B cell (primary cell): ENCODE measurements at regions of chr2 and their contacts with region 1.

Region 1: GRCh38 chr2:230913406-230914143 is 11.5 kb downstream of the GPR55 start:
- DNase-seq: peak; percentile 82
- ATAC-seq: peak; percentile 87
- H3K4me3 ChIP-seq: no peak overlapping the region
- H3K4me3 Mint-ChIP-seq: no peak overlapping the region
- H3K27ac ChIP-seq: no peak overlapping the region
- H3K27ac Mint-ChIP-seq: no peak overlapping the region
- H3K4me1 ChIP-seq: peaks cover 0 to 10% of the 10 kb centered on the region in 2 donors
- H3K4me1 Mint-ChIP-seq: peaks cover 16% of the 10 kb centered on the region
- H3K27me3 ChIP-seq: no peaks in the 10 kb centered on the region
- H3K27me3 Mint-ChIP-seq: no peaks in the 10 kb centered on the region
- CTCF ChIP-seq: peak; percentile 80

Region 2: GRCh38 chr2:230864598-230865306 is 48.8 kb before region 1 on chr2 and contains the start of gene ITM2C:
- CTCF ChIA-PET with region 1: interaction called, 40 read pairs
- POLR2A ChIA-PET with region 1: no interaction called
- intact Hi-C with region 1: loop called (anchors 1 kb)
- DNase-seq: peak; percentile 82
- ATAC-seq: peak; percentile 80
- H3K4me3 ChIP-seq: peak within 1 kb of the TSS; percentile 41 to 83 (median 65)
- H3K4me3 Mint-ChIP-seq: peak within 1 kb of the TSS; percentile 90
- H3K27ac ChIP-seq: peak within 1 kb of the TSS; percentile 39 to 63
- H3K27ac Mint-ChIP-seq: peak within 1 kb of the TSS; percentile 78
- H3K4me1 ChIP-seq: peaks cover 46 to 59% of the 10 kb centered on the region in 2 donors
- H3K4me1 Mint-ChIP-seq: peaks cover 56% of the 10 kb centered on the region
- H3K27me3 ChIP-seq: no peaks in the 10 kb centered on the region
- H3K27me3 Mint-ChIP-seq: peaks cover 7% of the 10 kb centered on the region
- CTCF ChIP-seq: peak; percentile 76
- total RNA-seq, gene ITM2C: 36.9 and 37.4 TPM in 2 replicates

Region 3: GRCh38 chr2:230902180-230902899 is 11.2 kb before region 1 on chr2:
- CTCF ChIA-PET with region 1: interaction called, 13 read pairs
- POLR2A ChIA-PET with region 1: no interaction called
- intact Hi-C with region 1: no loop called
- DNase-seq: peak; percentile 52
- ATAC-seq: peak; percentile 81
- H3K4me3 ChIP-seq: no peak overlapping the region
- H3K4me3 Mint-ChIP-seq: peak overlapping the region; percentile 32
- H3K27ac ChIP-seq: no peak overlapping the region
- H3K27ac Mint-ChIP-seq: peak overlapping the region; percentile 41
- H3K4me1 ChIP-seq: peaks cover 13 to 21% of the 10 kb centered on the region in 2 donors
- H3K4me1 Mint-ChIP-seq: peaks cover 14% of the 10 kb centered on the region
- H3K27me3 ChIP-seq: no peaks in the 10 kb centered on the region
- H3K27me3 Mint-ChIP-seq: no peaks in the 10 kb centered on the region
- CTCF ChIP-seq: peak; percentile 54

Region 4: DNA sequence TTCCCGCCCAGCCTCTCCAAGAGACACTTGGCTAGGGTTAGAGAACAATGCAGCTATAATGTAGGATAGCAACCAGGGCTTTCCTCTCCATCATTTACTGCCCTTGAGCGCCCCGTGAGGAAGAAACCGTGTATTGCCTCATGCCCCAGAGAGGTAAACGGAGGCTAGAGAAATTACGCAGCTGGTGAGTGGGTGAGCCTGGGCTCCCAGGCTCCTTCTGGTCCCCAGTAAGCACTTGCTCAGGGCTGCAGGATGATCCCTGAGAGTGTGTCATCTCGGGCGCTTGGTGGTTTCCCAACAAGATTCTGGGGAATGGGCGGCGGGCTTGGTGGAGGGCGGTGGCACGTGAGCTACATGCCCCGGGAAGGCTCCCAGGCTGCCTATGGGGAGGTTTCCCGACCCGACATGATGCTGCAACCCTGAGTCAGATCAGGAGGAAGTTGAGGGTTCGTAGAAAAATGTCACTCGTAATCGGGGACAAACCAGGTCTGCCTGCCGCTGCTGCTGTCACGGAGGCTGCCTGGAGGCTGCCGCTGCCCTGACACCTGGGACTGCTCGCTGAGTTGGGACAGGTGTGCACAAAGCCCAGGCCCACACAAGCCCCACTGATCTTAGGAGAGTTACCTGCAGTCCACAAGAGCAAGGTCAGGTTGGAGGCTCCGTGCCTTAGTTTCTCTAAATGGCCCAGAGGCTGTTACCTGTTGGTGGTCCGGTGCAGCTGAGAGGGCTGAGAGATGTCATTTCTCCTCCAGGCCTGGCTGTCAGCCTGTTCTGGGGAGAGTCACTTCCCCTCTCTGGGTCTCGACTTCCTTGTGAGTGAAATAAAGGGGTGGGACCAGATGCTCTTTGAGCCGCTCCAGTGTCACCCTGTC is 11.1 kb after region 1 on chr2 and contains the start of gene GPR55:
- CTCF ChIA-PET with region 1: interaction called, 18 read pairs
- POLR2A ChIA-PET with region 1: no interaction called
- intact Hi-C with region 1: no loop called
- DNase-seq: peak; percentile 64
- ATAC-seq: peak; percentile 74
- H3K4me3 ChIP-seq: peak within 1 kb of the TSS in 4 of 5 experiments; percentile 39 to 60 (median 50)
- H3K4me3 Mint-ChIP-seq: peak within 1 kb of the TSS; percentile 85
- H3K27ac ChIP-seq: peak within 1 kb of the TSS; percentile 12 to 42
- H3K27ac Mint-ChIP-seq: peak within 1 kb of the TSS; percentile 85
- H3K4me1 ChIP-seq: peaks cover 3 to 24% of the 10 kb centered on the region in 2 donors
- H3K4me1 Mint-ChIP-seq: peaks cover 22% of the 10 kb centered on the region
- H3K27me3 ChIP-seq: peaks cover 0 to 4% (median 0%) of the 10 kb centered on the region in 4 experiments
- H3K27me3 Mint-ChIP-seq: no peaks in the 10 kb centered on the region
- CTCF ChIP-seq: peak; percentile 29
- total RNA-seq, gene GPR55: 4.1 and 4.7 TPM in 2 replicates